ENCODE measurements at regions of chr5 and their contacts with region 1.

Region 1: GRCh38 chr5:140141241-140141640 is 15.5 kb downstream of the IGIP start:
- DNase-seq: no peak
- ATAC-seq: no peak
- H3K4me3 ChIP-seq: no peak overlapping the region
- H3K4me3 Mint-ChIP-seq: no peak overlapping the region
- H3K27ac ChIP-seq: no peak overlapping the region
- H3K27ac Mint-ChIP-seq: no peak overlapping the region
- H3K4me1 ChIP-seq: peaks cover 14% of the 10 kb centered on the region
- H3K4me1 Mint-ChIP-seq: peaks cover 8 to 24% of the 10 kb centered on the region in 2 donors
- H3K27me3 ChIP-seq: peaks cover 13% of the 10 kb centered on the region
- H3K27me3 Mint-ChIP-seq: peaks cover 10 to 13% of the 10 kb centered on the region in 2 donors
- CTCF ChIP-seq: no peak

Region 2: GRCh38 chr5:140073296-140073695 is 67.9 kb before region 1 on chr5:
- intact Hi-C with region 1: loop called (anchors 1 kb)
- DNase-seq: peak in 1 of 2 donors; percentile 70
- ATAC-seq: no peak
- H3K4me3 ChIP-seq: no peak overlapping the region
- H3K4me3 Mint-ChIP-seq: no peak overlapping the region
- H3K27ac ChIP-seq: no peak overlapping the region
- H3K27ac Mint-ChIP-seq: no peak overlapping the region
- H3K4me1 ChIP-seq: no peaks in the 10 kb centered on the region
- H3K4me1 Mint-ChIP-seq: no peaks in the 10 kb centered on the region
- H3K27me3 ChIP-seq: peaks cover 7% of the 10 kb centered on the region
- H3K27me3 Mint-ChIP-seq: peaks cover 16 to 42% of the 10 kb centered on the region in 2 donors
- CTCF ChIP-seq: peak; percentile 93

Region 3: DNA sequence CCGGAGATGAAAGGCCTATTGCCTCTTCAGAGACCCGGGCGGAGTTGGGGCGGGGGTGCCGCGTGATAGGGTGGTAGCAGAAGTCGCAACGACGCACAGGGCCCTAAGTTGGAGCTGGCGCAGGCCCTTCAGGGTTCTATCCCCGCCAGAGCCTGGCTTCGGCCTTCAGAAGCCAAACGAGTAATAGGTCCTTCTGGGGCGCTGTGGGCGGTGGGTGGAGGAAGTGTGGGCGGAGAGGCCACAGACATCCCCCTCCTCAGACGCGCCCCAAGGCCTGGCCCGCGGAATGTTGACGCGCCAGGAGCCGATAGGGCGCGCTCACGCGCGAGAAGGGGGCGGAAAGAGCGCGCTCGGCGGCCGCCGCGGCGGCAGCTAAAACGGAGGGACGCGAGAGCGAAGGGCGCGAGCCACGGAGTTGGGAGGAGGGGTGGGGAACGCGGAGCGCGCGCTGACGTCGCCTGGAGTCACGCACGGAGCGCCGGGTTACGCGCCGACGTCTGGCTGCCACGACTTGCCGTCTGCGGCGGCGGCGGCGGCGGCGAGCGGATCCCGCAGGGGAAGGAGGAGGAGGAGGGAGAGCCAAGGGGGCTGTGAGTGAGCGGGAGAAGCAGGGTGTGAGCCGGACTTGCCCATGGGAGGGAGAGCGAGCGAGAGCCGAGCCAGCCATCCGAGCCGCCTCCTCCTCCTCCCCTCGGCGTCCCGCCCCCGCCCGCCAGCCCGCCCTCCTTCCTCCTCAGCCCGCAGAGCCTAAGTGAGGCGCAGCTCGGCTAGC is 33.7 kb before region 1 on chr5:
- intact Hi-C with region 1: loop called (anchors 5 kb)
- DNase-seq: peak; percentile 90 to 98
- ATAC-seq: peak; percentile 87 to 95 (median 88)
- H3K4me3 ChIP-seq: peak overlapping the region; percentile 52
- H3K4me3 Mint-ChIP-seq: peak overlapping the region; percentile 97
- H3K27ac ChIP-seq: peak overlapping the region; percentile 95
- H3K27ac Mint-ChIP-seq: peak overlapping the region; percentile 91 to 97
- H3K4me1 ChIP-seq: peaks cover 23% of the 10 kb centered on the region
- H3K4me1 Mint-ChIP-seq: peaks cover 31 to 39% of the 10 kb centered on the region in 2 donors
- H3K27me3 ChIP-seq: peaks cover 29% of the 10 kb centered on the region
- H3K27me3 Mint-ChIP-seq: peaks cover 26 to 38% of the 10 kb centered on the region in 2 donors
- CTCF ChIP-seq: no peak

Region 4: DNA sequence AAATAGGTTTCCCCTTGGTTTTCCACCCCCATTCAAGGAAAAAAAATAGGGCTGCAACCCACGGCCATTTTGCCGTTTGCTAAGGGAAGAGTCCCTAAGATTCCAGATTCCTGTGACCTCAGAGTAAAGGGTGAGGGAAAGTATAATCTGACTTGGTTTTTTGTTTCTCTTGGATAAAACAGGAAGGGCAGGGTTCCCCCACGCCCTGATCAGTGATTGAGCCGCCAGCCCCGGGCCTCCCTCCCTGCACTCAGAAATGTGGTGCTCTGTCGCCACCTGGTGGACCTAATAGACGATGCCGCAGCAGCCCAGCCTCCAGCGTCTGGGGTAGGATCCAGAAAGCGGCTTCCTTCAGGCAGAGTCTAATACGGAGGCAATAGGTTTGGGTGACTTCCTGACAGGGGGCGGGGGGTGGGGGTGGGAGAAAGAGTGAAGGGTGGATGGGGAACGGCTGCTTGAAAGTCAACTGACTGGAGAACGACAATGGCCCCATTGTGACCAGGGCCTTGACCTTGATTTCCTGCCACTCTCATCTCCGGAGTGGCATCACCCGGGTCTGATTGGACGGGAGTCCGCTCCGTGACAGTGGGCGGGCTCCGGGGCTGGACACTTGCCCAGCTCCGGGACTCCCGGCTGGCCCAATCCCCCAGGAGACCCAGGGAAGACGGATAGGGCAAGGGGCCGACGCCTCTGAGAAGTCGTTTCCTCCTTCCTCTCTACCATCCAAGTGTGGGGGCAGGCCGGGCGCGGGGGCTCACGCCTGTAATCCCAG is 16.0 kb after region 1 on chr5:
- intact Hi-C with region 1: loop called (anchors 1 kb)
- DNase-seq: peak; percentile 83 to 94
- ATAC-seq: peak; percentile 96 to 100 (median 99)
- H3K4me3 ChIP-seq: no peak overlapping the region
- H3K4me3 Mint-ChIP-seq: peak overlapping the region; percentile 13
- H3K27ac ChIP-seq: no peak overlapping the region
- H3K27ac Mint-ChIP-seq: peak overlapping the region in 1 of 2 donors; percentile 31
- H3K4me1 ChIP-seq: peaks cover 14% of the 10 kb centered on the region
- H3K4me1 Mint-ChIP-seq: peaks cover 0 to 7% of the 10 kb centered on the region in 2 donors
- H3K27me3 ChIP-seq: no peaks in the 10 kb centered on the region
- H3K27me3 Mint-ChIP-seq: peaks cover 0 to under 1% of the 10 kb centered on the region in 2 donors
- CTCF ChIP-seq: peak; percentile 81